Panc1 (cell line): ENCODE measurements at regions of chr9 and their contacts with region 1.

Region 1: DNA sequence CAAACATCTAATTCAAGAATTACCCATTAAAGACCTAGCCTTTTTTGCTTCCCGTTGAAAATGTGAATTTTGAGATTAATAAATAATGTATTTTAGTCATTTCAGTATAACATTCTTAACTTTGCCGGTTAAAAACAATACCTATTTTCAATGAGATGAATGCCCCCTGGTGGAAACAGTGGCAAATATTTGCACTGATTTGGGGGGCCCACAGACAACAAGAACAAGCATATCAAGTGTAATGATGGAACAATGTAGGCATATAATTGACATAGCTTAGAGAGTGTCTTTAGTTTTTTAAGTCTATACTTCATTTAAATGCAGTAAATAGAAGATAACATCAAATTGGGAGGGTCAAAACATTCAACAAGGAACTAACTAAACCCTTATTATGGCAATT is 111.9 kb downstream of the NTRK2 start:
- DNase-seq: no peak
- ATAC-seq: no peak
- H3K4me3 ChIP-seq: no peak overlapping the region
- H3K27ac ChIP-seq: no peak overlapping the region
- H3K4me1 ChIP-seq: no peaks in the 10 kb centered on the region
- H3K27me3 ChIP-seq: no peaks in the 10 kb centered on the region
- CTCF ChIP-seq: peak; percentile 28; the same call in 1 of the 2 replicates

Region 2: DNA sequence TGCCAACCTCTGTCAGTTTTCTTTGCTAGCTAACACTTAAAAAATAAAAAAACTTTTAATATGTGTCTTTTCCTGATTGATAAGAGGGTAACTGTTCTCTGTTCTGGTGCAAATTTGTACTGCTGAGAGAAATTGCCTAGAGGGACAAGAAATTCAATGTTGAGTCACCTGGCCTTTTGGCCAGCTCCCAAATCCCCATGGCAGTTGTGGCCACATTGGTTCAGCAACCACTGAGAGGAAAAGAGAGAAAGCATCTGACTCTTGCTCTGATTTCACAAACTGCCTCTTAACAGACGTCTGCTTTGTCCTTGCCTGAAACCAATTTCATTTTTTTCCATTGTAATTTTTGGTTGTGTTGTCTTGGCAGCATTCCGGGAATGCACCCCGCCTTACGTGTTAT is 69.6 kb before region 1 on chr9:
- CTCF ChIA-PET with region 1: no interaction called
- POLR2A ChIA-PET with region 1: no interaction called
- in situ Hi-C with region 1: no loop called
- intact Hi-C with region 1: no loop called
- DNase-seq: no peak
- ATAC-seq: 0 out of 2 replicates have a peak, but pooled peaks have one; percentile 42
- H3K4me3 ChIP-seq: no peak overlapping the region
- H3K27ac ChIP-seq: no peak overlapping the region
- H3K4me1 ChIP-seq: no peaks in the 10 kb centered on the region
- H3K27me3 ChIP-seq: no peaks in the 10 kb centered on the region
- CTCF ChIP-seq: no peak

Region 3: DNA sequence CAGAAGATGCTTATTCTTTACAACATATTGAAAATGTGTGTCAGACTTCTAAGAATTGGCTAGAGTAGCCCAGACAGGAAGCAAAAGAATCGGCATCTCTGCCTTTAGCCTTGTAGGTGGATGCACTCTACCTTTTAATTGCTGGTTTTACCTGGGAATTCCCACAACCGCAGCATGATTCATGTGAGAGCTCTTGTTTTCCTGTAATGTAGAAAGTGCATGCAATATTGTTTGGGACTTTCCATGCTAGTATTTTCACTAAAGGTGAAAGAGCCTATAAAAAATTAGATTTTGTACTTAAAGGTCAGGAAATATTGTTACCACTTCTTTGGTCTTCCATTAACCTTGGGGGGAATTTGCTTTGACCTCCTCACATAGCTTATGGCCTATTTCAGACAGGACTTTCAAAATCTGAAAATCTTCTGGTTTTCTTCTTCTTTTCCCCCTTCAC is 22.1 kb before region 1 on chr9:
- CTCF ChIA-PET with region 1: no interaction called
- POLR2A ChIA-PET with region 1: no interaction called
- in situ Hi-C with region 1: no loop called
- intact Hi-C with region 1: no loop called
- DNase-seq: no peak
- ATAC-seq: no peak
- H3K4me3 ChIP-seq: no peak overlapping the region
- H3K27ac ChIP-seq: no peak overlapping the region
- H3K4me1 ChIP-seq: no peaks in the 10 kb centered on the region
- H3K27me3 ChIP-seq: no peaks in the 10 kb centered on the region
- CTCF ChIP-seq: no peak

Region 4: GRCh38 chr9:84845956-84846900 is 64.8 kb after region 1 on chr9:
- CTCF ChIA-PET with region 1: no interaction called
- POLR2A ChIA-PET with region 1: no interaction called
- in situ Hi-C with region 1: no loop called
- intact Hi-C with region 1: loop called (anchors 10 kb)
- DNase-seq: no peak
- ATAC-seq: no peak
- H3K4me3 ChIP-seq: no peak overlapping the region
- H3K27ac ChIP-seq: no peak overlapping the region
- H3K4me1 ChIP-seq: no peaks in the 10 kb centered on the region
- H3K27me3 ChIP-seq: no peaks in the 10 kb centered on the region
- CTCF ChIP-seq: no peak

Region 5: GRCh38 chr9:85172001-85172978 is 390.8 kb after region 1 on chr9:
- CTCF ChIA-PET with region 1: no interaction called
- POLR2A ChIA-PET with region 1: no interaction called
- in situ Hi-C with region 1: no loop called
- intact Hi-C with region 1: no loop called
- DNase-seq: no peak
- ATAC-seq: no peak
- H3K4me3 ChIP-seq: no peak overlapping the region
- H3K27ac ChIP-seq: no peak overlapping the region
- H3K4me1 ChIP-seq: no peaks in the 10 kb centered on the region
- H3K27me3 ChIP-seq: no peaks in the 10 kb centered on the region
- CTCF ChIP-seq: no peak

Region 6: DNA sequence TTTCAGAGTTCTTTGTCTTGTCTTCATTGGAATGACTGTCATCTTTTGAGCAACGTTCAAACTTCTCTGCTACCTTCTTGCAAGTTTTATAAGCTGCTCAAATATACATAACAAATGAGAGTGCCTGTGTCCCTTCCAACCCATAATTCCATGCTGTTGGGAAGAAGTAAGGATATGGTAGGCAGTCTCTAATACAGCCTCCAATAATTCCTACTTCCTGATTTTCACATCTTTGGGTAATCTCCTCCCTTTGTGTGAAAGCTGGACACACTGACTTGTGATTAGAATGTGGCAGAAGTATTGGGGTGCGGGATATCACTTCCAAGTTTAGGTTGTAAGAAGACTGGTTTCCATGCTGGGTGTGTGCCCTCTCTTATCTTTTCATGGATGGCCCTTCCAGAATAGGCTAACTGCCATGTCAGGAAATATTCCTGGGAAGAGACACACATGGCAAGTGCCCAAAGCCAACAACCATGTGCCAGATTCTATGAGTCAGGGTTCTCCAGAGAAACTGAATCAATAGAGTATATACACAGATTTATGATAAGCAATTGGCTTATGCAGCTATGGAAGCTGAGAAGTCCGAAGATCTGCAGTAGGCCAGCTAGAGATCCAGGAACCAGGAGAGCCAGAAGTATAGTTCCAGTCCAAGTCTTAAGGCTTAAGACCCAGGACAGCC is 419.4 kb after region 1 on chr9:
- CTCF ChIA-PET with region 1: no interaction called
- POLR2A ChIA-PET with region 1: no interaction called
- in situ Hi-C with region 1: no loop called
- intact Hi-C with region 1: no loop called
- DNase-seq: no peak
- ATAC-seq: no peak
- H3K4me3 ChIP-seq: no peak overlapping the region
- H3K27ac ChIP-seq: no peak overlapping the region
- H3K4me1 ChIP-seq: no peaks in the 10 kb centered on the region
- H3K27me3 ChIP-seq: no peaks in the 10 kb centered on the region
- CTCF ChIP-seq: no peak